Activated CD4-positive, alpha-beta memory T cell treated with anti-CD3 and anti-CD28 coated beads for 36 hours (primary cell): ENCODE measurements at regions of chr19 and their contacts with region 1.

Region 1: DNA sequence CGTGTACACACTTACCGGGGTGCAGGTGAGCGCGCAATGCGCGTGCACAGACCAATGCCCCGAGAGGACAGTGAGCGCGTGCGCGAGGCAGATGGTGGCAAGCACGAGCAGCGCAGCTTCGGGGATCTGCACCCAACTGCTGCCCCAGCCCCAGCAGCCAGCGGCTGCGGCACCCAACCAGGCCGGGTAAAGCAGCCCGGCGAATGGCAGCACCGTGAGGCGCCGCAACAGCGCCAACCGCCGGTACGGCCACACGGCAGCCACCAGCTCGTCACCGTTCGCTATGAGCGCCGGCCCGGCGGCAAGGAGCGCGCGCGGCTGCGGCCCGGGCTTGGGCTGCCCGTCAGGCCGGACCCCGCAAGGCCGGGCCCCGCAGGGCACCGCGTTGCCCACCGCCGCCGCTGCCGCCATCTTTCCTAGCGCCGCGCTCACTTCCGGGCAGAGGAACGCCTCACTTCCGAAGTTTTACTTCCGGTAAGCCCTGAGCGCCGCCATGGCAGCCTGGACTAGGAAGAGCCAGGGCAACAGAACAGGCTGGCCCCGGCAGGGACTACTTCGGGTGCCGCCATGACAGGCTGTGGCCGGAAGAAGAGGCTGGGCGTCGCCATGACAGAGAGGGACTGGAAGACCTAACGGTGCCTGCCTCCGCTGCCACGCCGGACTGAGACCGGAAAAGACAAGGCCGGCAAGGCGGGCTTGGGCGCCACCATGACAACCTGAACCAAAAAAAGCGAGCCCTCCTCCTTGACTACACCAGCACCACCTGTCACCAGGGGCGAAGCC is at the start of gene ATP13A1:
- DNase-seq: peak; percentile 95
- H3K4me3 Mint-ChIP-seq: peak within 1 kb of the TSS; percentile 96
- H3K27ac Mint-ChIP-seq: peak within 1 kb of the TSS; percentile 98
- H3K4me1 Mint-ChIP-seq: peaks cover 39% of the 10 kb centered on the region
- H3K27me3 Mint-ChIP-seq: no peaks in the 10 kb centered on the region
- total RNA-seq, gene ATP13A1: 66.6 to 69.2 TPM

Region 2: GRCh38 chr19:19488875-19489690 is 174.4 kb before region 1 on chr19:
- CTCF ChIA-PET with region 1: interaction called, 4 read pairs
- POLR2A ChIA-PET with region 1: no interaction called
- intact Hi-C with region 1: loop called (anchors 1 kb)
- DNase-seq: peak; percentile 97
- H3K4me3 Mint-ChIP-seq: peak overlapping the region; percentile 57
- H3K27ac Mint-ChIP-seq: peak overlapping the region; percentile 95
- H3K4me1 Mint-ChIP-seq: peaks cover 51% of the 10 kb centered on the region
- H3K27me3 Mint-ChIP-seq: no peaks in the 10 kb centered on the region

Region 3: GRCh38 chr19:19643158-19644053 is 20.0 kb before region 1 on chr19 and contains the start of gene GMIP:
- CTCF ChIA-PET with region 1: interaction called, 7 read pairs
- POLR2A ChIA-PET with region 1: interaction called, 5 read pairs
- intact Hi-C with region 1: loop called (anchors 1 kb)
- DNase-seq: peak; percentile 89
- H3K4me3 Mint-ChIP-seq: peak within 1 kb of the TSS; percentile 99
- H3K27ac Mint-ChIP-seq: peak within 1 kb of the TSS; percentile 98
- H3K4me1 Mint-ChIP-seq: peaks cover 12% of the 10 kb centered on the region
- H3K27me3 Mint-ChIP-seq: no peaks in the 10 kb centered on the region
- total RNA-seq, gene GMIP: 78.6 to 79.4 TPM

Region 4: GRCh38 chr19:19821366-19821951 is 158.0 kb after region 1 on chr19 and contains the start of gene ZNF506:
- CTCF ChIA-PET with region 1: interaction called, 4 read pairs
- POLR2A ChIA-PET with region 1: interaction called, 15 read pairs
- intact Hi-C with region 1: loop called (anchors 1 kb)
- DNase-seq: peak; percentile 99
- H3K4me3 Mint-ChIP-seq: peak within 1 kb of the TSS; percentile 97
- H3K27ac Mint-ChIP-seq: peak within 1 kb of the TSS; percentile 97
- H3K4me1 Mint-ChIP-seq: peaks cover 39% of the 10 kb centered on the region
- H3K27me3 Mint-ChIP-seq: no peaks in the 10 kb centered on the region
- total RNA-seq, gene ZNF506: 32.9 to 39.3 TPM

Region 5: DNA sequence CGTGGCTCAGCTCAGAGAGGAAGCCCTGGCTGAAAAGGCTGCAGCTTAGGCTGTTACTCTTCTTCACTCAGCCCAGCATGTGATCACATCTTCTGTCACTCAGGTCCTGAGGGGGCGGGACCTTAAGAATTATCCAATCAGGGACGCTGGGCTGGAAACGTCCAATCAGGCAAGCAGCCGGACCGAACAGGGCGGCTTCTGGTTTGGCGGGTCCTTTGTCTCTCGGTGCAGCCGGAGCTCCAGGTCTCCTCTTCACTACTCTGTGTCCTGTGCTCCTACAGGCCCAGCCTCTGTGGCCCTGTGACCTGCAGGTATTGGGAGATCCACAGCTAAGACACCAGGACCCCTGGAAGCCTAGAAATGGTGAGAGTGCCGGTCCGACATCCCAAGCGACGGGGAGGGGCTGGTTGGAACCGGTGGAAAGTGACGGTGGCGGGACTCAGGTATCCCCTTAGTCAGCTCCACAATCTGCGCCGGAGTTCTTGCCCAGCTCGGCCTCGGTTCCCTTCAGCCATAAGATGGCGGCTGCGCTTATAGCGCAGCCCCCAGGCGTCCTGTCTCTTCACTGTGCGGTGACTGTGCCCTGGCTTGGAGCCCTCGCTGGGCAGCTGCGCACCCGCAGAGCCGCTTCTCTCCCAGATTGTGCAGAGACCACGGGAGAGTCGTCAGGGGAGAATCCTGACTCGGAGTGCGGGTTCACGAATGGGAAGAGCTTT is 237.4 kb after region 1 on chr19 and contains the start of gene ZNF93:
- CTCF ChIA-PET with region 1: no interaction called
- POLR2A ChIA-PET with region 1: interaction called, 8 read pairs
- intact Hi-C with region 1: loop called (anchors 2 kb)
- DNase-seq: peak; percentile 96
- H3K4me3 Mint-ChIP-seq: peak within 1 kb of the TSS; percentile 98
- H3K27ac Mint-ChIP-seq: peak within 1 kb of the TSS; percentile 96
- H3K4me1 Mint-ChIP-seq: peaks cover 35% of the 10 kb centered on the region
- H3K27me3 Mint-ChIP-seq: no peaks in the 10 kb centered on the region
- total RNA-seq, gene ZNF93: 15.6 to 17.0 TPM